ENCODE measurements at regions of chr14 and their contacts with region 1.

Region 1: GRCh38 chr14:105414456-105415371 is 4.9 kb upstream of the MTA1 start:
- DNase-seq: peak; percentile 52 to 82
- ATAC-seq: peak; percentile 80
- H3K4me3 ChIP-seq: peak overlapping the region; percentile 36 to 71 (median 58)
- H3K27ac ChIP-seq: peak overlapping the region; percentile 64 to 93 (median 82)
- H3K4me1 ChIP-seq: peaks cover 22 to 30% of the 10 kb centered on the region in 2 donors
- H3K27me3 ChIP-seq: peaks cover 0 to 4% (median 0%) of the 10 kb centered on the region in 3 donors
- CTCF ChIP-seq: peak; percentile 61 to 92 (median 90)
- POLR2A ChIP-seq: no peak

Region 2: DNA sequence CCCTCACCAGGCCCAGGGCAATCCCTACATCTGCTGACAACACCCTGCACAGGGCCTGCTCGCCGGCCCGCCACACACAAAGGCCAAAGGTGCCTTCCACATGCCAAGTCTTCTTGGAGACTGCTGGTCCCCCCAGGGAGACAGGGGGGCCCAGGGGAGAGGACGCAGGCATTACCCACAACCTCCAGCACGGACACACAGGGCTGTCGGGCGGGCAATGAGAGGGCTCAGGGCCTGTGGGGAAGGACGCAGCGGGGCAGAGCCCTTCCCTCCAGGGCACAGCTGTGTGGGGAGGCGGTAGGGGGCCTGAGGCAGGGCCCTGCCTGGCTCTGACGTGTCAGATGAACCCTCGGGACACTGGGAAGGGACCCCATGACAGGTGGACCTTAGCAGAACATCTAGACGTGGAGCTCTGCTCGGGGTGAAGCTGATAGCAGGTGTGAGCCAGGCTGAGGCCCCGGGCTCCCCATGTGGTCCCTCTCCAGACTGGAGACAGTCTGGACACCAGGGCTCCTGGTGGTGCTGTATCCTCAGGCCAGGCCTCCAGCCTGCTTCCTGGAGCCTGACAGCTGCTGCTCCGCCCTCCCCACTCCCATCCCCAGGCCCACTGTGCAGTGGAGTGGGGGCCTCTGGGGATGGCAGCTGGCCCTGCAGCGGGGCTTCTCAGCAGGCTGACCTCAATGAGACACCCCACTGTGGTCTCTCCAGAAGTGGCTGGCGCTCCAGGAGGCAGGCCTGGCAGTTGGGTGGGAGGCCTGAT is 202.0 kb before region 1 on chr14:
- in situ Hi-C with region 1: no loop called
- intact Hi-C with region 1: no loop called
- DNase-seq: no peak
- ATAC-seq: no peak
- H3K4me3 ChIP-seq: no peak overlapping the region
- H3K27ac ChIP-seq: no peak overlapping the region
- H3K4me1 ChIP-seq: peaks cover 0 to 7% of the 10 kb centered on the region in 2 donors
- H3K27me3 ChIP-seq: no peaks in the 10 kb centered on the region
- CTCF ChIP-seq: no peak
- POLR2A ChIP-seq: no peak

Region 3: DNA sequence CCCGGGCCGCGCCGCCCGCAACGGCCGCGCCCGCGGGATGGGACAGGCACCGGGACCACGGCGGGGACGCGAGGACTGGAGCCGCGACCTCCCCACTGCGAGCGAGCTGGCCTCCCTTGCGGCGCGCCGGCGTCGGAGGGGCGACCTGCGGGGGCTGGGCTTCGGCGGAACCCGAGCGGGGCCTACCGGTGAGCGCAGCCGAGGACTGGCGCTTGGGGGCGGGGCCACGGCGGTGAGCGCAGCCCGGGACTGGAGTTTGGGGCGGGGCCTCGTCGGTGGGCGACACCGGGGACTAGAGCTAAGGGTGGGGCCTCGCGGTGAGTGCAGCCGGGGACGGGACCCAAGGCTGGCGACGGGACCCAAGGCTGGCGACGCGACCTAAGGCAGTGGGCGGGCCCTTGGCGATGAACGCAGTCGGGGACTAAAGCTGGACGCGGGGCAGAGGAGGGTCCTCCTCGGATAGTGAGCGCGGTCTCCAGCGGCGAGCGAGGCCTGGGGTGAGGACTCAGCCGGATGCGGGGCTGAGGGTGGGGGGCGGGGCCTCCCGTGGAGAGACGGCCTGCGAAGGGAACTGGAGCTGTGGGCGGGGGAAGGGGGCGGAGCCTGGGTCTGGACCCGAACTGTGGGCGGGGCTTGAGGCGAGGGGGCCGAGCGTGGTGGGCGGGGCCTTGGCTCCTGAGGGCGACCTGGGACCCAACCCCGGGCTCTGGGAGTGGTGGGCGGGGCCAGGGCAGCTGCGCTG is 113.8 kb before region 1 on chr14 and contains the start of gene BRF1:
- in situ Hi-C with region 1: no loop called
- intact Hi-C with region 1: loop called (anchors 10 kb)
- DNase-seq: peak; percentile 96 to 97
- ATAC-seq: peak; percentile 91 to 94
- H3K4me3 ChIP-seq: peak within 1 kb of the TSS; percentile 69 to 97 (median 75)
- H3K27ac ChIP-seq: peak within 1 kb of the TSS; percentile 90 to 99 (median 94)
- H3K4me1 ChIP-seq: peaks cover 12 to 14% of the 10 kb centered on the region in 2 donors
- H3K27me3 ChIP-seq: no peaks in the 10 kb centered on the region
- CTCF ChIP-seq: no peak
- POLR2A ChIP-seq: peak; percentile 73 to 76
- total RNA-seq, gene BRF1: 19.5 to 27.4 (median 21.4) TPM

Region 4: GRCh38 chr14:105398044-105398725 is 16.5 kb before region 1 on chr14 and contains the start of gene TEX22:
- in situ Hi-C with region 1: no loop called
- intact Hi-C with region 1: loop called (anchors 1 kb)
- DNase-seq: peak; percentile 78 to 82
- ATAC-seq: peak; percentile 85 to 91
- H3K4me3 ChIP-seq: peak within 1 kb of the TSS; percentile 70 to 100 (median 94)
- H3K27ac ChIP-seq: peak within 1 kb of the TSS; percentile 79 to 94 (median 90)
- H3K4me1 ChIP-seq: peaks cover 17 to 19% of the 10 kb centered on the region in 2 donors
- H3K27me3 ChIP-seq: no peaks in the 10 kb centered on the region
- CTCF ChIP-seq: peak in 2 of 5 experiments; percentile 36 to 45
- POLR2A ChIP-seq: peak; percentile 66 to 81
- total RNA-seq, gene TEX22: not detected

Region 5: DNA sequence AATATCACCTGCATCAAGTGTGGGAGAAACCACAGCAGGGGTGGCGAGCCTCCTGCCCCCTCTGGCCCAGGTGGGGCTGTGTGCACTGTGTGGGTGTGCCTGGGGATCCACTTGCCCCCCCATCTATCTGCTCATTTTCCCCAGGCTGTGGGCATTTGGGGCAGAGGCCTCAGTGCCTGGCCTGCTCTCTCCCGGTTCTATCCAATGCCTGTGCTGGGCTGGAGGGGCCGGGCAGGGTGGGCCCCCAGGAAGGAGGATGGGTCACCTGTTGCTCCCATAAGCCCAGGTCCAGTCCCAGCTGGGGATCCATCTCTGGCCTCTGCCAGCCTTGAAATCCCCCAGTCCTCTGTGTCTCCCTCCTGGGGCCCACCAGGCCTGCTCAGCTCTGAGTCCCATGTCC is 217.3 kb after region 1 on chr14:
- in situ Hi-C with region 1: no loop called
- intact Hi-C with region 1: no loop called
- DNase-seq: no peak
- ATAC-seq: no peak
- H3K4me3 ChIP-seq: no peak overlapping the region
- H3K27ac ChIP-seq: no peak overlapping the region
- H3K4me1 ChIP-seq: no peaks in the 10 kb centered on the region
- H3K27me3 ChIP-seq: peaks cover 0 to 5% (median 0%) of the 10 kb centered on the region in 3 donors
- CTCF ChIP-seq: no peak
- POLR2A ChIP-seq: no peak

Measured in gastrocnemius medialis (tissue), 4 donors.